Naive thymus-derived CD8-positive, alpha-beta T cell (primary cell): ENCODE measurements at regions of chr19 and their contacts with region 1.

Region 1: GRCh38 chr19:35748106-35749020 is at the start of gene LIN37:
- DNase-seq: peak; percentile 92 to 99 (median 98)
- ATAC-seq: peak; percentile 74 to 75
- H3K4me3 Mint-ChIP-seq: peak within 1 kb of the TSS; percentile 96 to 99 (median 98)
- H3K27ac Mint-ChIP-seq: peak within 1 kb of the TSS; percentile 89 to 98 (median 96)
- H3K4me1 Mint-ChIP-seq: peaks cover 23 to 55% (median 49%) of the 10 kb centered on the region in 4 donors
- H3K27me3 Mint-ChIP-seq: no peaks in the 10 kb centered on the region
- polyA plus RNA-seq, gene LIN37: 5.4 to 15.5 (median 8.1) TPM

Region 2: GRCh38 chr19:35648017-35648961 is 100.1 kb before region 1 on chr19 and contains the start of gene COX6B1:
- POLR2A ChIA-PET with region 1: interaction called, 11 read pairs
- DNase-seq: peak; percentile 75 to 96 (median 92)
- ATAC-seq: peak; percentile 74 to 77
- H3K4me3 Mint-ChIP-seq: peak within 1 kb of the TSS; percentile 93 to 100 (median 98)
- H3K27ac Mint-ChIP-seq: peak within 1 kb of the TSS; percentile 87 to 98 (median 96)
- H3K4me1 Mint-ChIP-seq: peaks cover 19 to 64% (median 47%) of the 10 kb centered on the region in 4 donors
- H3K27me3 Mint-ChIP-seq: no peaks in the 10 kb centered on the region
- polyA plus RNA-seq, gene COX6B1: 824 to 920 (median 852) TPM

Region 3: GRCh38 chr19:35702223-35703012 is 45.9 kb before region 1 on chr19:
- POLR2A ChIA-PET with region 1: interaction called, 14 read pairs
- DNase-seq: peak; percentile 84 to 96 (median 91)
- ATAC-seq: peak; percentile 99 to 100
- H3K4me3 Mint-ChIP-seq: peak overlapping the region; percentile 91 to 99 (median 98)
- H3K27ac Mint-ChIP-seq: peak overlapping the region; percentile 85 to 98 (median 94)
- H3K4me1 Mint-ChIP-seq: peaks cover 5 to 9% (median 8%) of the 10 kb centered on the region in 4 donors
- H3K27me3 Mint-ChIP-seq: peaks cover 0 to 9% (median 2%) of the 10 kb centered on the region in 5 donors